Right ventricle myocardium inferior (tissue), 1 donor: ENCODE measurements at regions of chr11 and their contacts with region 1.

Region 1: DNA sequence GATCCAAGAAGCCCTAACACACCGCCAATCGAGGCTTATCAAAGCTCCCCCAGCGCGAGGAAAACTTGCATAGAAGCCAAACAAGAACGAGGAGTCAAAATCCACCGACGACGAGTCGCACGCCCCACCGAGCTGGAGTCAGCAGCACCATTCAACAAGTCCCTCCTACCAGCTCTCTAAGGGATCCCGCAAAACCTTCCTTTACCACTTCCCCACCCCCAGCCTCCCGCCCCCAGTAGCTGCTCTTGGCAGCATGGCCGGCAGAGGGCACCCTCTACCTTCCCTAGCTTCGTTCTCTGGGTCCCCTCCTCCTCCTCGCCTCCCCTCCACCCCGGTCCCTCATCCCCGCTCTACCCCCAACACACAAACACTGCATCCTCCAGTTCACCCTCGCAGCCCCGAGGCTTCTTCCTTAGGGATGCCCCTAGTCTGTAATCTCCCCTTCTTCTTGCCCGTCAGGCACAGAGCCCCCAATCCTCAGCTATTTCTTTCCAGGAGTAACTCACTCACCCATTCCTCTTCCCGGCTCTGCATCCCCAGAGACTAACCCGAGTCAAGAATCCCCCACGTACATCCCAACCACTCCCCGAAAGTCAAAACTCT is 1.3 kb downstream of the BDNF start:
- DNase-seq: peak; percentile 84
- ATAC-seq: peak; percentile 88

Region 2: GRCh38 chr11:27514558-27514957 is 184.4 kb before region 1 on chr11:
- intact Hi-C with region 1: loop called (anchors 5 kb)
- DNase-seq: no peak
- ATAC-seq: peak; percentile 75

Region 3: GRCh38 chr11:27642954-27643353 is 56.0 kb before region 1 on chr11:
- intact Hi-C with region 1: loop called (anchors 5 kb)
- DNase-seq: no peak
- ATAC-seq: no peak

Region 4: GRCh38 chr11:27770576-27770975 is 71.6 kb after region 1 on chr11:
- intact Hi-C with region 1: no loop called
- DNase-seq: no peak
- ATAC-seq: no peak

Region 5: DNA sequence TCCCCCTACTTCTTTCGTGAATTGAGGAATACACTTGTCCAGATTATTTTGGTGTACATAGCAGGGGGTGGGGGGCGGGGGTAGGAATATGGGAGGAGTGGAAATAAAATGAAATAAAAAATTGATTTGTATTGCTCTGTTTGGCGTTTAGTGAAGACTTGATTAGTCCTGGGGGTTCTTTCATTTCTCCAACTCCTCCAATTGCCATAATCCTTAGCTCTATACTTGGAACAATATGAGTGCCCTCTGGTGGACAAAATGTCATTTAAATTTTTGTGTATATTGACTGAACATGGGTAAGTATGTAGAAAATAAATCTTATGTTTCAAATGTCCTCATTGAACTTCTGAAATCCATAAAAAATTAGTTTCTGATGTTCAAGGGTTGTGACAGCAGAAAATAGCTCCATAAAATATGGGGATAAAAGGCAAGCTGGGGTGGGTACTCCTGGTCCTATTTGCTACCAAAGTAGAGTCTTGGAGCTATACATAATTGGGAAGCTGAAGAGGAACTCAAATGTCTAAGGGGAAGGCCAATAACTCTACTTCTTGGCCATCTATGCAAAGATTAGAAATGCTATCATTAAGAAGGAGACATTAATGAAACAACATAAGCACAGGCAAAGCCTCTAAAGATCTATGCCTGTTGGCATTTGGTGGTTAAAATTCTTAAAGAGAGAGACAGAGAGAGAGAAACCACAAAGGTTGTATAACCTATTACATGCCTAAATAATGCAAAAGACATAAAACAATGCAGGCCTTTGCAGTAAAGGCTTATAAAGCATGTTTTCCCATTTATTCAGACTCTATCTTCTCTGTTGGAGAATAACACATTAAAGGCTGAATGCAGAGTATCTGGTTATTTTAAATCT is 830.8 kb after region 1 on chr11:
- intact Hi-C with region 1: loop called (anchors 1 kb)
- DNase-seq: no peak
- ATAC-seq: no peak

Region 6: DNA sequence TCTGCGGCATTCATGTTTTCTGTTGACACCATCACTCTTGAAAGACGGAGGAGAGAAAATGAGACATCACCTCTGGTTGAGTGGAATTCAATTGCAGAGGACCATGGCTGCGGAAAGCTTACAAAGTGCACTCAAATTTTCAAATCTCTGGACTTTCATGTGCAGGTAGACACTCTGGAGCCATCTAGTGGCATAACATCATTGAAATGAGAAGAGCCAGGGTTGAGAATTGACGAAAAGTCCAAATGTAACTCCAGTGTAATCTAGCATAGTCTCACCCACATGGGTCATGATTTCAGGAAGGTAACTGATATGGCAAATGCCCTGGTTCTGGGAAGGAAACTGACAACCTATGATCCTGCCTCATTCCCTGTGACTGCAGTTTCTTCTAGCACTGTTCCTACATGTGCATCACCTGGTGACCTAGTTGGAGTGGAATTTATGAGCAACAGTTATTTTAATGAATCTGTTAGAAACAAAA is 1630.0 kb after region 1 on chr11:
- intact Hi-C with region 1: loop called (anchors 5 kb)
- DNase-seq: no peak
- ATAC-seq: no peak